ENCODE measurements at regions of chr4 and their contacts with region 1.

Region 1: GRCh38 chr4:147638942-147639341 is 21.7 kb downstream of the TMEM184C start:
- DNase-seq: peak; percentile 34
- ATAC-seq: peak; percentile 24
- H3K4me3 ChIP-seq: no peak overlapping the region
- H3K27ac ChIP-seq: no peak overlapping the region
- H3K4me1 ChIP-seq: no peaks in the 10 kb centered on the region
- H3K27me3 ChIP-seq: no peaks in the 10 kb centered on the region
- CTCF ChIP-seq: no peak
- POLR2A ChIP-seq: no peak
- RAD21 ChIP-seq: no peak

Region 2: GRCh38 chr4:147651563-147651962 is 12.6 kb after region 1 on chr4:
- CTCF ChIA-PET with region 1: no interaction called
- POLR2A ChIA-PET with region 1: no interaction called
- dilution Hi-C with region 1: no loop called
- in situ Hi-C with region 1: no loop called
- intact Hi-C with region 1: loop called (anchors 1 kb)
- DNase-seq: no peak
- ATAC-seq: no peak
- H3K4me3 ChIP-seq: no peak overlapping the region
- H3K27ac ChIP-seq: no peak overlapping the region
- H3K4me1 ChIP-seq: no peaks in the 10 kb centered on the region
- H3K27me3 ChIP-seq: no peaks in the 10 kb centered on the region
- CTCF ChIP-seq: no peak
- POLR2A ChIP-seq: no peak
- RAD21 ChIP-seq: no peak